ENCODE measurements at regions of chr16 and their contacts with region 1.

Region 1: DNA sequence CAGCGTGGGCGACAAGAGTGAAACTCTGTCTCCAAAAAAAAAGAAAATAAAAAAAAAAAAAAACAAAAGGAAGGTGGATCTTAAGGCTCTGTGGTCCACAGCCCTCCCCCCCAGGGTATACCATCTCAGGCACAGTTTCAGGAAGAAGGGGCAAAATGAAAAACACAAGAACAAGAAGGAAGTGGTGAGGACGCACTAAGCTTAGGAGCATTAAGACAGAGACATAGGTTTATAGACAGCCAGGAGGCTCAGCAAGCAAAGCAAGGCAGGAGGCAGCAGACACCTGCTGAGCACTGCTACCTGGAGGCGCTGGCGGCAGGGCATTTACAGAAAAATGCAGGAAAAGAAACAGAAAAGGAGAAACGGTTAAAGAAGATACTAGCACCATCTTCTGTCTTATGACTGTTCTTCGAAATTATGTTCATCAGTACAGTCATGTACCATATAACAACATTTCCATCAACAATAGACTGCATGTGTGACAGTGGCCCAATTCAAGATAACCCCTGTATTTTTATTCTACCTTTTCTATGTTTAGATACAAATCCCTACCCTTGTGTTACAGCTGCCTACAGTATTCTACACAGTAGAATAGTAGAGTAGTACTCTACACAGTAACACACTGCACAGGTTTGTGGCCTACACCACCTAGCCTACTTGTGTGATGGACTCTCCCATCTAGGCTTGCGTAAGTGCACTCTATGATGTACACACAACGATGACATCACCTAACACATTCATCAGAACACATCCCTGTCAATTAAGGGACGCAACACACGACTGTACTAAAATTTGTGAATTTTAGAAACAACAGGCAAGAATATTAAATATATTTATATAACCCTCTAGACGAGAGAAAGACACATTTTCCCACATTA is 62.5 kb downstream of the XPO6 start:
- DNase-seq: peak in 4 of 5 donors; percentile 41 to 50 (median 48)
- H3K4me3 ChIP-seq: peak overlapping the region in 1 of 2 donors; percentile 6
- H3K4me3 Mint-ChIP-seq: peak overlapping the region; percentile 28 to 73 (median 66)
- H3K27ac ChIP-seq: peak overlapping the region; percentile 18
- H3K27ac Mint-ChIP-seq: peak overlapping the region; percentile 81 to 95 (median 91)
- H3K4me1 ChIP-seq: peaks cover 57% of the 10 kb centered on the region
- H3K4me1 Mint-ChIP-seq: peaks cover 52 to 83% (median 71%) of the 10 kb centered on the region in 4 donors
- H3K27me3 ChIP-seq: no peaks in the 10 kb centered on the region
- H3K27me3 Mint-ChIP-seq: no peaks in the 10 kb centered on the region

Region 2: GRCh38 chr16:28188085-28188916 is 39.1 kb after region 1 on chr16:
- CTCF ChIA-PET with region 1: interaction called, 10 read pairs
- POLR2A ChIA-PET with region 1: interaction called, 53 read pairs
- intact Hi-C with region 1: no loop called
- DNase-seq: peak in 1 of 5 donors; percentile 32
- H3K4me3 ChIP-seq: no peak overlapping the region
- H3K4me3 Mint-ChIP-seq: peak overlapping the region; percentile 67 to 89 (median 80)
- H3K27ac ChIP-seq: peak overlapping the region; percentile 50
- H3K27ac Mint-ChIP-seq: peak overlapping the region; percentile 91 to 98 (median 93)
- H3K4me1 ChIP-seq: peaks cover 97% of the 10 kb centered on the region
- H3K4me1 Mint-ChIP-seq: peaks cover 75 to 97% (median 87%) of the 10 kb centered on the region in 4 donors
- H3K27me3 ChIP-seq: no peaks in the 10 kb centered on the region
- H3K27me3 Mint-ChIP-seq: no peaks in the 10 kb centered on the region

Region 3: DNA sequence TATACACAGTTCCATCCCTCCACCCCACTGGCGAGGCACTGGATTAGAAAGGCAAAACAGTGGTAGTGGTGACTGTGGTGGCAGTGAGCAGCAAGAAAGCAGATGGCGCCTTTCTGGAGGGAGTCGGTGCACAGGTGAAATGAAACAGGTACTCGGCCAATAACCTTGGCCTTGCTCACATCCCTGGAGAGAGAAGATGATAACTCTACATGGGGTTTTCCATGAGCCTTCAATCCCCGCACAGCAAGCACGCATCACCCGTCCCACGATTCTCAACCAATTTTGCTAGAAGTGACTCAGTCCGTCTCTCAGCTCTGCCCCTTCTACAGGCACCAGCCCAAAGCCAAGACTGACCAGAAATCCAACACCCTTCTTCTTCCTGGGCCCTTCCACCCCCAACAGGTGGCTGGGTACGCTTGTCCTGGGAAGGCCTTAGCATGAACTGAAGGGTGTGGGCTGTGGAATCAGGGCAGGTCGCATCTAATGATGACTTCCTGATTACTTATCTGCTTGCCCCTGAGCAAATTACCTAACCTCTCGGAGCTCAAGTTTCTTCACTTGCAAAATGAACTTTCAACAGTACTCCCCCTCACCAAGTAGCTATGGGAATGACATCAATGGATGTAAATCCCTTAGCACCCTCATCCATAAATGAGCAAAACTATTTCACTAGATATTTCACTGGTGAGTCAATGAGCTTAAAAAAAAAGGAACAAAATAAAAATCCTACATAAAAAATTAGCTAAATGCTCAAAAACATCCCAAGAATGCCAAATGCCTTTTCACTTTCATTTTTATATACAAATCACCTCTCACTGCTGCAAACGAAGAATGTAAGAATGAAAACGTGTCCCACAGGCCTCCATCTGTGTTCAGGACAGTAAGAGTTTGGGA is 44.5 kb after region 1 on chr16:
- CTCF ChIA-PET with region 1: interaction called, 10 read pairs
- POLR2A ChIA-PET with region 1: interaction called, 53 read pairs
- intact Hi-C with region 1: no loop called
- DNase-seq: peak in 2 of 5 donors; percentile 42 to 80
- H3K4me3 ChIP-seq: peak overlapping the region; percentile 18 to 53
- H3K4me3 Mint-ChIP-seq: peak overlapping the region; percentile 76 to 91 (median 84)
- H3K27ac ChIP-seq: peak overlapping the region; percentile 88
- H3K27ac Mint-ChIP-seq: peak overlapping the region; percentile 94 to 99 (median 98)
- H3K4me1 ChIP-seq: peaks cover 87% of the 10 kb centered on the region
- H3K4me1 Mint-ChIP-seq: peaks cover 62 to 85% (median 75%) of the 10 kb centered on the region in 4 donors
- H3K27me3 ChIP-seq: no peaks in the 10 kb centered on the region
- H3K27me3 Mint-ChIP-seq: no peaks in the 10 kb centered on the region

Measured in CD4-positive, alpha-beta memory T cell (primary cell).